ENCODE measurements at regions of chr4 and their contacts with region 1.

Region 1: DNA sequence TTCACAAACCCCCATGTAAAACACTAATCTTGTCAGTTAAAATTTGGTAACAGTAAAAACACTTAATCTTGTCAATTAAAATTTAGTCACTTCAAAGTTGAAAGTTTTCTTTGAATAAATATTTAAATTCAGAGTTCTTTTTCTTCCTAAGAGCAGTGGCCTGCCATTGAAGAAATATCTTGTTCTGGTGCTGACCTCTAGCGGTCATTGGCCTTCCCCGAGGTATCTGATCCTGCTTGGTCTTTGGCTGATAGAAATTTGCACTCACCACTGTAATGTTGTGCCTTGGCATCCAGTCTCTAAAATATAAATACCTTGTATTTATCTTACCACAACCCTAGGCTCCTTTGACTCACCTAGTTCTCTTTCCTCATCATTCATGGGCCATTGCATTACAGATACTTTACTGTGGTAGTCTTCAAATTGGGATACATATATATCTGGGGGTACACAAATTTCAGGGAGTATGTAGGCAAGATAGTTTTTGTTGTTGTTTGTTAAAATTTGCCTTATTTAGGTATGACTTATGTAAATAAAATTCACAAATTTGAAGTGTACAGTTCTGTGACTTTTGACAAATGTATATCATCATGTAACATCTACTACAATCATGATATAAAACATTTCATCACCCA is 6.7 kb upstream of the ART3 start:
- DNase-seq: peak; percentile 61 to 67 (median 62)
- H3K4me3 ChIP-seq: no peak overlapping the region
- H3K4me3 Mint-ChIP-seq: no peak overlapping the region
- H3K27ac ChIP-seq: no peak overlapping the region
- H3K27ac Mint-ChIP-seq: no peak overlapping the region
- H3K4me1 ChIP-seq: no peaks in the 10 kb centered on the region
- H3K4me1 Mint-ChIP-seq: no peaks in the 10 kb centered on the region
- H3K27me3 ChIP-seq: no peaks in the 10 kb centered on the region
- H3K27me3 Mint-ChIP-seq: no peaks in the 10 kb centered on the region

Region 2: GRCh38 chr4:75895744-75896314 is 171.9 kb before region 1 on chr4:
- CTCF ChIA-PET with region 1: interaction called, 37 read pairs
- POLR2A ChIA-PET with region 1: no interaction called
- intact Hi-C with region 1: loop called (anchors 1 kb)
- DNase-seq: peak in 4 of 5 donors; percentile 26 to 49 (median 36)
- H3K4me3 ChIP-seq: no peak overlapping the region
- H3K4me3 Mint-ChIP-seq: no peak overlapping the region
- H3K27ac ChIP-seq: no peak overlapping the region
- H3K27ac Mint-ChIP-seq: no peak overlapping the region
- H3K4me1 ChIP-seq: no peaks in the 10 kb centered on the region
- H3K4me1 Mint-ChIP-seq: peaks cover 0 to 3% (median under 1%) of the 10 kb centered on the region in 4 donors
- H3K27me3 ChIP-seq: no peaks in the 10 kb centered on the region
- H3K27me3 Mint-ChIP-seq: no peaks in the 10 kb centered on the region

Region 3: DNA sequence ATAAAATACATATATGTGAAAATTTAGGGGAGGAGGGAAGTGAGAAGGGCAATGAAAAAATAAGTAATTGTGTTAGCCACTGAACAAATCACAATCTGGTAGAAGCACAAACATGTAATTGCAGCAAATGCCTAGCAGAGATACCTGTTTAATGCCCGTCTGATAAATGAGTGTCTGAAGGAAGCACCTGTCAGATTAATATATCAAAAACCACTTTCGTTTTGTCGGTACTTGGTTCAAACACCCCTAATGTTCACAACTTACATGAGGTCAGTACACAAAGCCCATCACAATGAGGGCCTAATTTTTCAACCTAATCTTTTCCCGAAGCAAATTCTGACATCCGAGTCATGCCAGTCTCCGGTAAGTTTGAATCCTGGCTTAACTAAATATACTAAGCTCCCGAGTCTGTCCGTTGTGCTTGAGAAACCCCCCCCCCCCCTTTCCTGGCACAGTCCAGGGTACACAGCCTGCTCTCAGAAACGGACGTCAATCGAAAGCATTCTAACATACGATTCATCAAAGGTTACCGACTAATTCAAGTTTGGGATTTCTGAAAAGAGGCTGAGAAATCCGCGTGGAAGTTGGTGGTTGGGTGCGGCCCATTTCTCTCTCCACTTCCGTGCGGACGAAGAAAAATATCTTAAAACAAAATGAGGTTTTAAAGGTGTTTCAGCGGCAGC is 77.8 kb before region 1 on chr4:
- CTCF ChIA-PET with region 1: interaction called, 49 read pairs
- POLR2A ChIA-PET with region 1: no interaction called
- intact Hi-C with region 1: loop called (anchors 1 kb)
- DNase-seq: peak in 4 of 5 donors; percentile 3 to 14 (median 8)
- H3K4me3 ChIP-seq: peak overlapping the region; percentile 84 to 93
- H3K4me3 Mint-ChIP-seq: peak overlapping the region; percentile 95 to 98 (median 96)
- H3K27ac ChIP-seq: peak overlapping the region; percentile 70
- H3K27ac Mint-ChIP-seq: peak overlapping the region; percentile 92 to 97 (median 95)
- H3K4me1 ChIP-seq: peaks cover 53% of the 10 kb centered on the region
- H3K4me1 Mint-ChIP-seq: peaks cover 0 to 34% (median 20%) of the 10 kb centered on the region in 4 donors
- H3K27me3 ChIP-seq: no peaks in the 10 kb centered on the region
- H3K27me3 Mint-ChIP-seq: peaks cover 0 to 5% of the 10 kb centered on the region in 2 donors

Region 4: DNA sequence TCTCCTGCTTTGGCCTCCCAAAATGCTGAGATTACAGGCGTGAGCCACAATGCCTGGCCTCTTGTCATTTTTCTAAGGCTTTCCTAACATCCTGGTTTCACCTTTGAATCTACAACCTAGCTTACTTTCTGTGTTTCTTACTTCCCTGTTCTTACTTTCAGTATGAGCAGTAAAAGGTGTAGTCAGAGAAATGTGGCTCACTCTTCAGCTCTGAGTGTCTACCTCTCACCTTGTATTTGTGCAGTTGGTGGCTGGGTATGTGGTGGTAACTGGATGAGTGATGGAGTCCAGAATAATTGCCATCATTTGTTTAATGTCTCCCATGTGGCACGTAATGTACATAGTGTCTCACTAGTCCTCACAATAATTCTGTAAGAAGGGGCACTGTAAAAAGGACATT is 12.8 kb before region 1 on chr4:
- CTCF ChIA-PET with region 1: interaction called, 11 read pairs
- POLR2A ChIA-PET with region 1: no interaction called
- intact Hi-C with region 1: no loop called
- DNase-seq: no peak
- H3K4me3 ChIP-seq: no peak overlapping the region
- H3K4me3 Mint-ChIP-seq: no peak overlapping the region
- H3K27ac ChIP-seq: no peak overlapping the region
- H3K27ac Mint-ChIP-seq: no peak overlapping the region
- H3K4me1 ChIP-seq: no peaks in the 10 kb centered on the region
- H3K4me1 Mint-ChIP-seq: peaks cover 0 to under 1% (median under 1%) of the 10 kb centered on the region in 4 donors
- H3K27me3 ChIP-seq: no peaks in the 10 kb centered on the region
- H3K27me3 Mint-ChIP-seq: peaks cover 0 to 4% of the 10 kb centered on the region in 2 donors

Region 5: DNA sequence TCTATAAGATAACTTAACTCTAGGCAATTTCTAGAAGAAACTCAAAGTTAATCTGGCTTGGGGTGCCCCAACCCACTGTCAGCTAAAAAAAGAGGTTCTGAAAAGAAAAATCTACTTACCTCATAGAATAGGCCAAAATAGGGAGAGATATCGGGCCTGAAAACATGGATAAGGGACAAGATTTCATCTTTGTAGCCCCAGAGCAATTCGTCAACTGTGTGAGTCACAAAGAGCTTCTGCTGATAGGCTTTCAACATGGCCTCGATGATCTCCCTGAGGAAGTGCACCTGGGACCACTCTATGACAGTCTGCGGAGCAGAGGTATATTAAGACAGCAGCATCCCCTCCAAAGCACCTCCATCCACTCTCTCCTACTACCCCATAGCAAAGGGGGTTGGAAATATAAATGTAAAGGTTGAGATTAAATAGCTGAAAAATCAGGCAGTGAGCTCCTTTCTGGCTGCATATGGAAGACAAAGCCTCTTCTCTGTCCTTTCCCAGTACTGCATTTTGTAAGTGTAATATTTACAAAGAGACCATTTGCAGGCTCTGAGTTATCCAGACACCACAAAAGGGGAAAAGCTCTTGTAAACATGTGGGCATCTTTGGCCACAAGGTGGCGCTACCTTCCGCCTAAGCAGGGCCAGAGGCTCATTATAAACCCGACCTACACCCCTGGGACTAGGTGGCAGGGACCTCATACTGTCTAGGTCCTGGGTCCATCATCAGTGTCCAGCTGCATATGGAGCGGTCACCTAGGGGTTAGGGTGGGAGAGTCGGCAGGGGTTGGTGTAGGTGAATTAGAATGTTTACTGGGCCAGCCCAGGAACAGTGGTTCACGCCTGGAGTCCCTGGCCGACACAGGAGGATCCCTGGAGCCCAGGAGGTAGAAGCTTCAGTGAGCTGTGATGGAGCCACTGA is 111.9 kb after region 1 on chr4:
- CTCF ChIA-PET with region 1: no interaction called
- POLR2A ChIA-PET with region 1: no interaction called
- intact Hi-C with region 1: no loop called
- DNase-seq: peak; percentile 66 to 76 (median 73)
- H3K4me3 ChIP-seq: no peak overlapping the region
- H3K4me3 Mint-ChIP-seq: no peak overlapping the region
- H3K27ac ChIP-seq: no peak overlapping the region
- H3K27ac Mint-ChIP-seq: no peak overlapping the region
- H3K4me1 ChIP-seq: no peaks in the 10 kb centered on the region
- H3K4me1 Mint-ChIP-seq: peaks cover 0 to 3% (median 0%) of the 10 kb centered on the region in 4 donors
- H3K27me3 ChIP-seq: no peaks in the 10 kb centered on the region
- H3K27me3 Mint-ChIP-seq: no peaks in the 10 kb centered on the region

Region 6: GRCh38 chr4:76279472-76279871 is 211.7 kb after region 1 on chr4:
- CTCF ChIA-PET with region 1: no interaction called
- POLR2A ChIA-PET with region 1: no interaction called
- intact Hi-C with region 1: no loop called
- DNase-seq: peak in 4 of 5 donors; percentile 26 to 49 (median 46)
- H3K4me3 ChIP-seq: no peak overlapping the region
- H3K4me3 Mint-ChIP-seq: no peak overlapping the region
- H3K27ac ChIP-seq: no peak overlapping the region
- H3K27ac Mint-ChIP-seq: no peak overlapping the region
- H3K4me1 ChIP-seq: no peaks in the 10 kb centered on the region
- H3K4me1 Mint-ChIP-seq: peaks cover 0 to 4% (median under 1%) of the 10 kb centered on the region in 4 donors
- H3K27me3 ChIP-seq: no peaks in the 10 kb centered on the region
- H3K27me3 Mint-ChIP-seq: peaks cover 5 to 10% of the 10 kb centered on the region in 2 donors